Activated B cell treated with CpG ODN at 0.5 μM for 24 hours (primary cell): ENCODE measurements at regions of chr16 and their contacts with region 1.

Region 1: GRCh38 chr16:10297341-10298006 is 88.4 kb upstream of the ATF7IP2 start:
- DNase-seq: peak; percentile 43
- ATAC-seq: peak; percentile 94
- H3K4me3 Mint-ChIP-seq: peak overlapping the region; percentile 69
- H3K27ac Mint-ChIP-seq: peak overlapping the region; percentile 97
- H3K4me1 Mint-ChIP-seq: peaks cover 62% of the 10 kb centered on the region
- H3K27me3 Mint-ChIP-seq: no peaks in the 10 kb centered on the region
- CTCF ChIP-seq: no peak

Region 2: GRCh38 chr16:10308305-10309193 is 11.1 kb after region 1 on chr16:
- CTCF ChIA-PET with region 1: no interaction called
- POLR2A ChIA-PET with region 1: interaction called, 18 read pairs
- intact Hi-C with region 1: loop called (anchors 1 kb)
- DNase-seq: no peak
- ATAC-seq: no peak
- H3K4me3 Mint-ChIP-seq: no peak overlapping the region
- H3K27ac Mint-ChIP-seq: no peak overlapping the region
- H3K4me1 Mint-ChIP-seq: peaks cover 20% of the 10 kb centered on the region
- H3K27me3 Mint-ChIP-seq: no peaks in the 10 kb centered on the region
- CTCF ChIP-seq: no peak

Region 3: DNA sequence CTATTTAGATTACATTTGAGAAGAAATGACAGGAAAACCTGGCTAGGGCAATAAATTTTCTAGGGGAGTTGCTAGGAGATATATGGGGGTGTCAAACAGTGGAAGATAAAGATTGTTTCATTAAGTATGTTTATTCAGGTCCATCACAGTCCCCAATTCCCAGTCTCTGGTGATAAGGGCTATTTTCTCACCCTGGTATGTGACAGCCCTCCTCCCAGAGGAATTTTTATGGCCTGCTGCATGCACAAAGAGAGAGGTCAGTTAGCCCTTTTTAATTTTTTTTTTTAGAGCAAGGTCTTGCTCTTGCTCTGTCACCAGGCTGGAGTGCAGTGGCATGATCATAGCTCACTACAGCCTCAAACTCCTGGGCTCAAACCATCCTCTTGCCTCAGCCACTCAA is 34.8 kb after region 1 on chr16:
- CTCF ChIA-PET with region 1: no interaction called
- POLR2A ChIA-PET with region 1: interaction called, 5 read pairs
- intact Hi-C with region 1: loop called (anchors 1 kb)
- DNase-seq: no peak
- ATAC-seq: no peak
- H3K4me3 Mint-ChIP-seq: no peak overlapping the region
- H3K27ac Mint-ChIP-seq: peak overlapping the region; percentile 46
- H3K4me1 Mint-ChIP-seq: peaks cover 40% of the 10 kb centered on the region
- H3K27me3 Mint-ChIP-seq: no peaks in the 10 kb centered on the region
- CTCF ChIP-seq: no peak

Region 4: GRCh38 chr16:10385725-10386516 is 88.4 kb after region 1 on chr16 and contains the start of gene ATF7IP2:
- CTCF ChIA-PET with region 1: interaction called, 3 read pairs
- POLR2A ChIA-PET with region 1: interaction called, 5 read pairs
- intact Hi-C with region 1: loop called (anchors 1 kb)
- DNase-seq: peak; percentile 86
- ATAC-seq: peak; percentile 99
- H3K4me3 Mint-ChIP-seq: peak within 1 kb of the TSS; percentile 99
- H3K27ac Mint-ChIP-seq: peak within 1 kb of the TSS; percentile 96
- H3K4me1 Mint-ChIP-seq: peaks cover 49% of the 10 kb centered on the region
- H3K27me3 Mint-ChIP-seq: no peaks in the 10 kb centered on the region
- CTCF ChIP-seq: no peak
- total RNA-seq, gene ATF7IP2: 48.6 and 55.9 TPM in 2 replicates

Region 5: DNA sequence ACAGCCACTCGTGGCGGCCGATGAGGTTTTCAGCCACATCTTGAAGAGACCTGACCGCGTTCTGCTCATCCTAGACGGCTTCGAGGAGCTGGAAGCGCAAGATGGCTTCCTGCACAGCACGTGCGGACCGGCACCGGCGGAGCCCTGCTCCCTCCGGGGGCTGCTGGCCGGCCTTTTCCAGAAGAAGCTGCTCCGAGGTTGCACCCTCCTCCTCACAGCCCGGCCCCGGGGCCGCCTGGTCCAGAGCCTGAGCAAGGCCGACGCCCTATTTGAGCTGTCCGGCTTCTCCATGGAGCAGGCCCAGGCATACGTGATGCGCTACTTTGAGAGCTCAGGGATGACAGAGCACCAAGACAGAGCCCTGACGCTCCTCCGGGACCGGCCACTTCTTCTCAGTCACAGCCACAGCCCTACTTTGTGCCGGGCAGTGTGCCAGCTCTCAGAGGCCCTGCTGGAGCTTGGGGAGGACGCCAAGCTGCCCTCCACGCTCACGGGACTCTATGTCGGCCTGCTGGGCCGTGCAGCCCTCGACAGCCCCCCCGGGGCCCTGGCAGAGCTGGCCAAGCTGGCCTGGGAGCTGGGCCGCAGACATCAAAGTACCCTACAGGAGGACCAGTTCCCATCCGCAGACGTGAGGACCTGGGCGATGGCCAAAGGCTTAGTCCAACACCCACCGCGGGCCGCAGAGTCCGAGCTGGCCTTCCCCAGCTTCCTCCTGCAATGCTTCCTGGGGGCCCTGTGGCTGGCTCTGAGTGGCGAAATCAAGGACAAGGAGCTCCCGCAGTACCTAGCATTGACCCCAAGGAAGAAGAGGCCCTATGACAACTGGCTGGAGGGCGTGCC is 609.7 kb after region 1 on chr16:
- CTCF ChIA-PET with region 1: no interaction called
- POLR2A ChIA-PET with region 1: no interaction called
- intact Hi-C with region 1: loop called (anchors 5 kb)
- DNase-seq: no peak
- ATAC-seq: no peak
- H3K4me3 Mint-ChIP-seq: no peak overlapping the region
- H3K27ac Mint-ChIP-seq: peak overlapping the region; percentile 64
- H3K4me1 Mint-ChIP-seq: peaks cover 66% of the 10 kb centered on the region
- H3K27me3 Mint-ChIP-seq: no peaks in the 10 kb centered on the region
- CTCF ChIP-seq: no peak